ENCODE measurements at regions of chr17 and their contacts with region 1.

Region 1: DNA sequence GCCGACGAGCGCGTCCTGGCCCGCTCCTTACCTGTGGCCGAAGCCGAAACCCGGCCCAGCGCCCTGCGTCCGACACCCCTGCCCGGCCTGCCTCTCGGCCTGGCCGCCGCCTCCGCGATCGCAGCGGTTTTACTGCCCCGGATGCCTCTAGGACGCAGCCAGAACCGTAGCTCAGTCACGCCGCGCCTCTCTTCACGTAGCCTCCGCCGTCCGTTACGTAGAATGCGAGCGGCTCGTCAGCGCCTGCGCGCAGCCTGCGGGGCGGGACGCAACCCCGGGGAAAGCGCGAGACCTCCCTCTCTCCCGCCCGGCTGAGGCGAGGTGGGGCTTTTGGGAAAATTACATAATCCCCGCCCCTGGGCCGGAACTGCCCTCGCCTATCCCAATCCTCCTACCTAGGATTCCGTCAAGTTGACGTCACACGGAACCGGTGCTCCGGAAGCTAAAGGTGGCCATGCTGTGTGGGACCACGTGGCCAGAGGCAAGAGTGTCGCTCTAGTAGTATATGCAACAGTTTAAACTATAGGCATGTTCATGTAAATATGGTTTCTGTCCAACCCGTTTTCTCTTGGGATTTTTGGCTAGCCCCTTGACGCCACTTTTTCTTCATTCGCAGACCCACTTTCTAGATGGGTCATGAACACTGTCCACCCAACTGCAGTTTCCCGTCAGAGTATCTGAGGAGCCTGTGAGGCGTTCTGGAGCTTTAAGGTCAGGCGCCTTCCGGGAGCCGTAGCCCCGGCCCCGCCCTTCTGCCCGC is at the start of gene CCDC47:
- DNase-seq: peak; percentile 100
- ATAC-seq: peak; percentile 88
- H3K4me3 ChIP-seq: peak within 1 kb of the TSS; percentile 81 to 83
- H3K27ac ChIP-seq: peak within 1 kb of the TSS; percentile 91
- H3K4me1 ChIP-seq: peaks cover 15 to 34% of the 10 kb centered on the region in 2 experiments
- H3K27me3 ChIP-seq: no peaks in the 10 kb centered on the region
- CTCF ChIP-seq: no peak
- POLR2A ChIP-seq: peak; percentile 69
- RAD21 ChIP-seq: no peak
- total RNA-seq, gene CCDC47: 117 TPM

Region 2: DNA sequence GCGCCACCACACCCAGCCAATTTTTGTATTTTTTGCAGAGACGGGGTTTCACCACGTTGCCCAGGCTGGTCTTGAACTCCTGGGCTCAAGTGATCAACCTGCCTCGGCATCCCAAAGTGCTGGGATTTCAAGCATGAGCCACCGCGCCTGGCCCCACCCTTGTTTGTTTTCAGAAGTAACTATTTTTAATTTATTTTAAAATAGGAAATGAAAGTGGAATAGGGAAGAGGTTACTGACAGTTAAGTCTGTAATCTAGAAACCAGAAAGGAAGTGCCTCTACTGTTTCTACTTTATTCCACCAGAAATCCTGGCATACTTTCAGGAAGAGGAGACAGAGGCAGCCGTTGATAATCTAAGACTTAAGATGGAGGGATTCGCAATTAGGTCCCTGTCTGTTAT is 582.0 kb before region 1 on chr17:
- CTCF ChIA-PET with region 1: no interaction called
- POLR2A ChIA-PET with region 1: no interaction called
- RAD21 ChIA-PET with region 1: no interaction called
- intact Hi-C with region 1: no loop called
- DNase-seq: no peak
- ATAC-seq: no peak
- H3K4me3 ChIP-seq: no peak overlapping the region
- H3K27ac ChIP-seq: no peak overlapping the region
- H3K4me1 ChIP-seq: peaks cover 0 to 17% of the 10 kb centered on the region in 2 experiments; a peak in 2 of 4 replicates
- H3K27me3 ChIP-seq: no peaks in the 10 kb centered on the region
- CTCF ChIP-seq: no peak
- POLR2A ChIP-seq: no peak
- RAD21 ChIP-seq: no peak

Region 3: GRCh38 chr17:63646488-63646806 is 127.1 kb before region 1 on chr17:
- CTCF ChIA-PET with region 1: no interaction called
- POLR2A ChIA-PET with region 1: no interaction called
- RAD21 ChIA-PET with region 1: no interaction called
- intact Hi-C with region 1: no loop called
- DNase-seq: no peak
- ATAC-seq: no peak
- H3K4me3 ChIP-seq: no peak overlapping the region
- H3K27ac ChIP-seq: no peak overlapping the region
- H3K4me1 ChIP-seq: peaks cover 8 to 13% of the 10 kb centered on the region in 2 experiments; a peak in 3 of 4 replicates
- H3K27me3 ChIP-seq: no peaks in the 10 kb centered on the region
- CTCF ChIP-seq: no peak
- POLR2A ChIP-seq: no peak
- RAD21 ChIP-seq: no peak

Region 4: GRCh38 chr17:63741221-63742049 is 32.1 kb before region 1 on chr17 and contains the start of gene STRADA:
- CTCF ChIA-PET with region 1: no interaction called
- POLR2A ChIA-PET with region 1: interaction called, 26 read pairs
- RAD21 ChIA-PET with region 1: no interaction called
- intact Hi-C with region 1: loop called (anchors 1 kb)
- DNase-seq: peak; percentile 98
- ATAC-seq: peak; percentile 90
- H3K4me3 ChIP-seq: peak within 1 kb of the TSS; percentile 87 to 97
- H3K27ac ChIP-seq: peak within 1 kb of the TSS; percentile 89
- H3K4me1 ChIP-seq: peaks cover 6 to 23% of the 10 kb centered on the region in 2 experiments; a peak in 3 of 4 replicates
- H3K27me3 ChIP-seq: no peaks in the 10 kb centered on the region
- CTCF ChIP-seq: no peak
- POLR2A ChIP-seq: peak; percentile 73
- RAD21 ChIP-seq: no peak; the same call in 1 of the 2 replicates
- total RNA-seq, gene STRADA: 38.0 TPM

Region 5: DNA sequence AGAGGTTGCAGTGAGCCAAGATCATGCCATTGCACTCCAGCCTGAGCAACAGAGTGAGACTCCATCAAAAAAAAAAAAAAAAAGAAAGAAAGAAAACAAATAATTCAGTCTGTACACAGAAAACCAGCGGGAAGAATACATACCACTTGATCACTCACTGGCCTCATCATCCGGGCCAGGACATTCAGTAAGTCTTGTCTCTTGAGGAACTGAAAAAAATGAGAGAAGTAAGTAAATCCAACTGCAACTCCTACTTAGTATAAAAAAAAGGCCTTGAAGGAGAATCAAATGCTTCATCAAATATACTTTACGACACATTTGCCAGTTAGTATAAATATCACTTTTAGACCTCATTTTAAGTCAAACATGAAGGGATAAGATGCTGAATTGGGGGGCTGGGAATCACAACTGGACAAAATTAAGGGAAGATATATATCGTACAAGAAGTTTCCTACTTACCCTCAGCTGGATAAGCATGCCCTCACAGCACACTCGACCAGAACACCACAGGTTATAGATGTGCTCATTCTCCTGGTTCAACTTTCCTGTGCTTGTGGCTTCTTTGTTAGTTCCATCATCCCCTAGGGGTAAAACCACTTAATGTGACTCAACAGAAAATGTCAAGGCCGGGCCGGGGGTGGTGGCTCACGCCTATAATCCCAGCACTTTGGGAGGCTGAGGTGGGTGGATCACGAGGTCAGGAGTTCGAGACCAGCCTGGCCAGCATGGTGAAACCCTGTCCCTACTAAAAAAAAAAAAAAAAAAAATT is 12.6 kb before region 1 on chr17:
- CTCF ChIA-PET with region 1: interaction called, 3 read pairs
- POLR2A ChIA-PET with region 1: interaction called, 13 read pairs
- RAD21 ChIA-PET with region 1: no interaction called
- intact Hi-C with region 1: no loop called
- DNase-seq: no peak
- ATAC-seq: no peak
- H3K4me3 ChIP-seq: no peak overlapping the region
- H3K27ac ChIP-seq: no peak overlapping the region
- H3K4me1 ChIP-seq: no peaks in the 10 kb centered on the region
- H3K27me3 ChIP-seq: no peaks in the 10 kb centered on the region
- CTCF ChIP-seq: no peak
- POLR2A ChIP-seq: no peak
- RAD21 ChIP-seq: no peak

Region 6: GRCh38 chr17:63785556-63785955 is 12.0 kb after region 1 on chr17:
- CTCF ChIA-PET with region 1: no interaction called
- POLR2A ChIA-PET with region 1: interaction called, 42 read pairs
- RAD21 ChIA-PET with region 1: no interaction called
- intact Hi-C with region 1: no loop called
- DNase-seq: no peak
- ATAC-seq: no peak
- H3K4me3 ChIP-seq: no peak overlapping the region
- H3K27ac ChIP-seq: no peak overlapping the region
- H3K4me1 ChIP-seq: peaks cover 13 to 60% of the 10 kb centered on the region in 2 experiments
- H3K27me3 ChIP-seq: no peaks in the 10 kb centered on the region
- CTCF ChIP-seq: no peak
- POLR2A ChIP-seq: no peak
- RAD21 ChIP-seq: no peak

Region 7: DNA sequence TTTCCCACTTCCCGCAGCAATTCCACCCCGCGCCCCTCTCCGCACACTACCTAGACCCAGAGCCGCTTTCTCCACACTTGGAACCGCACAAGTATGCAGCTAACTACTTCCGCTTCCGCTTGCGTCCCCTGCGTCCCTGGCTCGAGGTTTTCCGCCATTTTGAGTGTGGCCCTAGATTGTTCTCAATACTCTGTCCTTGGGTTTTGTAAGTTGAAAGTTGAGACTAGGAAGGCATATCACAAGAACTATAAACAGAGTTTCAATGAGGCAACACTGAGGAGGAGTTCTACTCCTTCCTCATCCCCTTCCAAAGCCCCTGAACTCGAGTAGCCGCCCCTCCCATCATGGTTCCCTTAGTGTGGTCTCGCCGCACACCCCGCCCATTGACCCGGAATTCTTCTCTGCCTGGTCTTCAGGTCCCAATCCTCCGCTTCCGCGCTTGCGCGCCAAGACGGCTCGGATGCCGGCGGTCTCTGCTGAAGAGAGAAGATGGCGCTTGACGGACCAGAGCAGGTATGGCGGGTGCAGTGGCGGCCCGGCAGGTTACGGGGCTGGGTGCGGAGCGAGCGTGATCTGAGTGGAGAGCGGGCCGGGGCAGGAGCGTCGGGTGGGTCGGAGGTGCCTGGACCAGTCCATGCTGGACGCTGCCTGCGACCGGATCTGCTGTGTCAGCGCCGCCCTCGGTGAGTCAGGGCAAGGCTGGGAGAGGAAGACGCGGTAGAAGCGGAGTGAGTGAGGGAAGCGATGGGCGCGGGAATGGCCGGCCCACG is 53.6 kb after region 1 on chr17 and contains the starts of genes FTSJ3 and PSMC5:
- CTCF ChIA-PET with region 1: no interaction called
- POLR2A ChIA-PET with region 1: interaction called, 16 read pairs
- RAD21 ChIA-PET with region 1: no interaction called
- intact Hi-C with region 1: loop called (anchors 1 kb)
- DNase-seq: peak; percentile 98
- ATAC-seq: peak; percentile 89
- H3K4me3 ChIP-seq: peak within 1 kb of the TSS; percentile 81 to 85
- H3K27ac ChIP-seq: peak within 1 kb of the TSS; percentile 81
- H3K4me1 ChIP-seq: peaks cover 8 to 16% of the 10 kb centered on the region in 2 experiments
- H3K27me3 ChIP-seq: no peaks in the 10 kb centered on the region
- CTCF ChIP-seq: peak in 2 of 3 experiments; percentile 35 to 53; a peak in 3 of 6 replicates
- POLR2A ChIP-seq: peak; percentile 89
- RAD21 ChIP-seq: no peak
- total RNA-seq, gene FTSJ3: 70.9 TPM
- total RNA-seq, gene PSMC5: 193 TPM

Region 8: GRCh38 chr17:63842540-63843386 is 69.2 kb after region 1 on chr17 and contains the start of gene SMARCD2:
- CTCF ChIA-PET with region 1: no interaction called
- POLR2A ChIA-PET with region 1: interaction called, 13 read pairs
- RAD21 ChIA-PET with region 1: no interaction called
- intact Hi-C with region 1: loop called (anchors 2 kb)
- DNase-seq: peak; percentile 100
- ATAC-seq: peak; percentile 87
- H3K4me3 ChIP-seq: peak within 1 kb of the TSS; percentile 92 to 95
- H3K27ac ChIP-seq: peak within 1 kb of the TSS; percentile 96
- H3K4me1 ChIP-seq: peaks cover 40 to 46% of the 10 kb centered on the region in 2 experiments
- H3K27me3 ChIP-seq: no peaks in the 10 kb centered on the region
- CTCF ChIP-seq: no peak
- POLR2A ChIP-seq: no peak
- RAD21 ChIP-seq: no peak
- total RNA-seq, gene SMARCD2: 168 TPM

Region 9: DNA sequence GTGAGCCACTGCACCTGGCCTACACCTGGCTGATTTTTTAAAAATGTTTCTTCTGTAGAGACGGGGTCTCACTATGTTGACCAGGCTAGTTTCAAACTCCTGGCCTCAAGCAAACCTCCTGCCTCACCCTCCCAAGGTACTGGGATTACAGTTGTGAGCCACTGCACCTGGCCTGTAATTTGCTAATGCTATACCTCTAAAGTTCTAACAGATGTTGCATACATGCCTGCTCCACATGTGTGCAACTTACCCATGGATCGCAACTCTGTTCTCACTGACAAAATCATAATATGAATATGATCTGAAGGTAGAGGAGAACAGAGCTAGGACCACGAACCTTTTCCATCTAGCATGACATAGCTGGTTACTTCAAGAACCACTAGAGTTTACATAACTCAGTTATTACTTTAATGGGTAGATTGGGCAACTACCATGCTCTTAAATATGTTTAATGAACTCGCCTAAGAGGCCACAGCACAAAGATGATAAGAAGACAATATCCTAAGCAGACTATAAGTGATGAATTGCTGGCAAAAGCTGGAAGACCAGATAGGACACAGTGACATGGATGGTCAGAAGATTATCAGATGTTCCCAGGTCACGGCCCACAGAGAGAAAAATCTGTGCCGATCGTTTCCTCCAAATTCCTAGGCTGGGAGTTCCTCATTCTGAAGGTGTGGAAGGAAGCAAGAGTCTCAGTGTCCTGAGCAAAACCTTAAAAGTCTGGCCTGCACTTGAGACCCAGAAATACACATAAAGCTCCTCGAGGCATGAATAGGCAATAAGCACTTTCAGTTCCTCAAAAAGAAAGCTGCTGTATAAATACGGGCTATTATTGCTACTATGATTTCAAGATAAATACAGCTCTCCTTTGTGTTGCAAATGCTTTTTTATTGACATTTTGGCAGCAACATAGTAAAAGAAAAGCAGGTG is 300.5 kb after region 1 on chr17:
- CTCF ChIA-PET with region 1: no interaction called
- POLR2A ChIA-PET with region 1: no interaction called
- RAD21 ChIA-PET with region 1: no interaction called
- intact Hi-C with region 1: no loop called
- DNase-seq: no peak
- ATAC-seq: no peak
- H3K4me3 ChIP-seq: no peak overlapping the region
- H3K27ac ChIP-seq: no peak overlapping the region
- H3K4me1 ChIP-seq: no peaks in the 10 kb centered on the region
- H3K27me3 ChIP-seq: no peaks in the 10 kb centered on the region
- CTCF ChIP-seq: no peak
- POLR2A ChIP-seq: no peak
- RAD21 ChIP-seq: no peak

Measured in HCT116 (cell line).